IMR-90 (cell line): ENCODE measurements at regions of chr2 and their contacts with region 1.

Region 1: DNA sequence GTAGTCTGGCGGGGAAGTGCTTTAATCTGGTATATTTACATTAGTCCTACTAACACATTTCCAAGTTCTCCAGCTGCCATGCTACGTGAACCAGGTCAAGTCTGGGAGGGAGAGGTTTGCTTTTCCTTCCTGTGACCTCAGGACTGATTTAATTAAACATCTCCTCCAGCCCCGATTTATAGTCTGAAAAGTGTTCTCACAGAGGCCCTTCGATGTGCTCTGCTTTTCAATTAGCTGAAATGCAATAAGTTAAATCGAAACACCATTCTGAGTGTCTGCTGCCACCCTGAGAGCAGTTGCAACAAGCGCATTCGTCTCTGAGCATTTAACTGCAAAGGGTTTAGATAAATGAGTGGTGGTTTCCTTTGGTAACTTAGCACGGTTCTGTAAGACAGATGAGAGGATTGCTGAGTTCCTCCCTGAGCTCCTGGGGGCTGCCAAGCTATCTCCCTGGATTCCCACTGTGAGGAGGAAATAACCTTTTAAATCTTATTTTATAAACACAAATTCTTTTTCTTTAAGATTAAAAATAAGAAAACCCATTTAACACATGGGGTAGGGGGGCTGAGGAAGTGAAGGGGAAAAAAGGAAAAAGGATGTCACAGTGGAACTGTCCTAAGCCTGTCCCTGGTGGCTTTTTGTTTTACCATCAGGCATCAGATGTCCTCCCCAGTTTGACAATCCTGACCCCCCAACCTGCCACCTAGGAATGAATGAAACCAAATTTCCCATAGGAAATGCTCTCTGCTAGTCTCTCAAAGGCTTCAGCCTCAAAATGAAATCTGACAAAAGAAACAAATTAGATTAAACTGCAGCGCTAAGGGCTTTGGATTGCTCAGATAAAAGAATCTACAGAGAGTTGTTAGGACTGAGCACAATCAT is 56.5 kb upstream of the CREB1 start:
- DNase-seq: peak; percentile 88
- ATAC-seq: peak; percentile 83
- H3K4me3 ChIP-seq: peak overlapping the region; percentile 14; the same call in 1 of the 2 replicates
- H3K27ac ChIP-seq: peak overlapping the region; percentile 62
- H3K4me1 ChIP-seq: peaks cover 7% of the 10 kb centered on the region
- H3K27me3 ChIP-seq: no peaks in the 10 kb centered on the region
- CTCF ChIP-seq: peak; percentile 92
- POLR2A ChIP-seq: no peak
- RAD21 ChIP-seq: peak; percentile 98

Region 2: DNA sequence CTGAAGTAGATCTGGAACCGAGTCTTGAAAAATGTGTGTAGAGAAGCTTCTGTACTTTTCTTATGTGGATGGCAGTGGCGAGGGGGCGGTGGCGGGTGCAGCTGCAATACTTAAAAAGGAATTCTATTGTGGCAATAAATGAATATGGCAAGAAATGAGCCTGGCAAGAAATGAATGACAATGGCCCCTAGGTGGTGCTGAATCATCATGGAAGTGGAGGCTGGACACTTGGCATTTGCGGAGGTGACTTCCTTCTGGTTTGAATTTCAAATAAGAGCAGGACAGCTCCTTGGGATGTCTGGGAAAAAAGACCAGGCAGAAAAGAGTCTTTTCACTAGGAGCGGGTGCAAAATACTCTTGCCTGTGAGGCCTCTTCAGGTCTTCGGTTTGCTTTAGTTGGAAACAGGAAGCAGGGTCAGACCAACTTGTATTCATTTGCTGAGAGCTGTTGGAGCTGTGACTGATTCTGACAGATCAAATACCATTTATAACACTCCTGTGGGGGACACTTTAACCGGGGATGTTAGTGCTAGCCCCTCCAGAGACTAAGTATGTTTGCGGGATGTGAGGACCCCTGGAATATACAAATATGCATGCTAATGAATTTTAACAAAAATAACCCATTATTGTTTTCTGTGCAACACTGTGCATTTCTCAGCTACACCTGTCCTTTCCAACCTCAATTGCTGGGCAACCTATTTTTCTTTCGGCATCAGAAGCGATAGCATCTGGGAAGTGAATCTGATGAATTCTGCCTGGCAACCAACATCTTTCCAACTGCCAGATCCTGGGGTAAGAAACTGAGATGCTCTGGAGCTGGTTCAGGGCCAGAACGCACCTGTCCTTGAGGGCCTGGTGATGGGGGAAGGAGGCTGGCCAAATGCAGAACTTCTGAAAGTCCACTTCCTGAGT is 672.5 kb before region 1 on chr2:
- CTCF ChIA-PET with region 1: interaction called, 4 read pairs
- POLR2A ChIA-PET with region 1: no interaction called
- dilution Hi-C with region 1: no loop called
- in situ Hi-C with region 1: loop called (anchors 5 kb)
- intact Hi-C with region 1: loop called (anchors 1 kb)
- DNase-seq: peak; percentile 76
- ATAC-seq: peak; percentile 82
- H3K4me3 ChIP-seq: no peak overlapping the region
- H3K27ac ChIP-seq: no peak overlapping the region
- H3K4me1 ChIP-seq: no peaks in the 10 kb centered on the region
- H3K27me3 ChIP-seq: no peaks in the 10 kb centered on the region
- CTCF ChIP-seq: peak; percentile 76
- POLR2A ChIP-seq: no peak
- RAD21 ChIP-seq: peak; percentile 90

Region 3: DNA sequence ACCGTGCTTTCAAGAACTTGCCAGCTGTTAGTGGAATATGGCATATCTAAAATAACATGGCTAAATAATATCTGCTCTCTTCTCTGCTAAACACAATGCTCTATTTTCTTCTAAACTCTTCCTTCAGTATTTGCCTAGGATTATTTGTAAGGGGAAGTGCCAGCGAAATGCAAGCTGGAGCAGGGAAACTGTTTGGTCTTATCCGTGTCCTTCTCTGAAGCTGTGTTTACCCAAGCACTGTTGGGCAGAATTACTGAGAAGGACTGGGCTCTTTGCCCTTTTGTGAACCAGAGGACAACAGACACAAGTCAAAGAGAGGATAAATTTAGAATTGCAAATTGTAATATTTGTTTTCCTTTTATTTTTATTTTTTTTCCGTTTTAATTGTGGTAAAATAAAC is 510.3 kb before region 1 on chr2:
- CTCF ChIA-PET with region 1: no interaction called
- POLR2A ChIA-PET with region 1: no interaction called
- dilution Hi-C with region 1: no loop called
- in situ Hi-C with region 1: no loop called
- intact Hi-C with region 1: no loop called
- DNase-seq: no peak
- ATAC-seq: no peak
- H3K4me3 ChIP-seq: no peak overlapping the region
- H3K27ac ChIP-seq: no peak overlapping the region
- H3K4me1 ChIP-seq: no peaks in the 10 kb centered on the region
- H3K27me3 ChIP-seq: peaks cover 6% of the 10 kb centered on the region
- CTCF ChIP-seq: no peak
- POLR2A ChIP-seq: no peak
- RAD21 ChIP-seq: no peak

Region 4: GRCh38 chr2:207073801-207074678 is 399.2 kb before region 1 on chr2:
- CTCF ChIA-PET with region 1: no interaction called
- POLR2A ChIA-PET with region 1: no interaction called
- dilution Hi-C with region 1: no loop called
- in situ Hi-C with region 1: no loop called
- intact Hi-C with region 1: loop called (anchors 5 kb)
- DNase-seq: peak; percentile 12
- ATAC-seq: peak; percentile 48
- H3K4me3 ChIP-seq: no peak overlapping the region
- H3K27ac ChIP-seq: no peak overlapping the region
- H3K4me1 ChIP-seq: 0 out of 2 replicates have a peak, but pooled peaks cover 2% of the 10 kb centered on the region
- H3K27me3 ChIP-seq: no peaks in the 10 kb centered on the region
- CTCF ChIP-seq: no peak
- POLR2A ChIP-seq: no peak; the same call in none of the 2 replicates
- RAD21 ChIP-seq: no peak

Region 5: DNA sequence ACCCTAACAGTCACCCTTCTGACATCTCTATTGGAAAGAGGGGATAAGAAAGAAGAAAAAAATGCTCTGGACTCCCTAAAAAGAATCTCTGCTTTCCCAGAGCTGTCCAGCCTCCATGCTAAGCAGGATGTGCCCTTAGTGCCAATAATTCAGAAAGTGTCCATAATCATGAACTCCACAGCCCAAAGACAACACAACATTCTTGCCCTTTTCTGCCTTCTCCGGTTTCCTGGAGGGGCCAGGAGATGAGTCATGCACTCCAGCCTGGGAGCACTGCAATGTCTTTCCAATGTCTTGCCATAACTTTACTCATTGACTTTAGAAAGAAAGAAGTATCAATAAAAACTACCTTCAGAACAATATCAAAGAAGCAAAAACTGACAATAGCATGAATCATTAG is 351.5 kb before region 1 on chr2:
- CTCF ChIA-PET with region 1: interaction called, 5 read pairs
- POLR2A ChIA-PET with region 1: no interaction called
- dilution Hi-C with region 1: no loop called
- in situ Hi-C with region 1: no loop called
- intact Hi-C with region 1: loop called (anchors 5 kb)
- DNase-seq: peak; percentile 85
- ATAC-seq: peak; percentile 81
- H3K4me3 ChIP-seq: no peak overlapping the region
- H3K27ac ChIP-seq: peak overlapping the region; percentile 21; the same call in 1 of the 2 replicates
- H3K4me1 ChIP-seq: peaks cover 26% of the 10 kb centered on the region
- H3K27me3 ChIP-seq: no peaks in the 10 kb centered on the region
- CTCF ChIP-seq: no peak
- POLR2A ChIP-seq: no peak
- RAD21 ChIP-seq: no peak

Region 6: DNA sequence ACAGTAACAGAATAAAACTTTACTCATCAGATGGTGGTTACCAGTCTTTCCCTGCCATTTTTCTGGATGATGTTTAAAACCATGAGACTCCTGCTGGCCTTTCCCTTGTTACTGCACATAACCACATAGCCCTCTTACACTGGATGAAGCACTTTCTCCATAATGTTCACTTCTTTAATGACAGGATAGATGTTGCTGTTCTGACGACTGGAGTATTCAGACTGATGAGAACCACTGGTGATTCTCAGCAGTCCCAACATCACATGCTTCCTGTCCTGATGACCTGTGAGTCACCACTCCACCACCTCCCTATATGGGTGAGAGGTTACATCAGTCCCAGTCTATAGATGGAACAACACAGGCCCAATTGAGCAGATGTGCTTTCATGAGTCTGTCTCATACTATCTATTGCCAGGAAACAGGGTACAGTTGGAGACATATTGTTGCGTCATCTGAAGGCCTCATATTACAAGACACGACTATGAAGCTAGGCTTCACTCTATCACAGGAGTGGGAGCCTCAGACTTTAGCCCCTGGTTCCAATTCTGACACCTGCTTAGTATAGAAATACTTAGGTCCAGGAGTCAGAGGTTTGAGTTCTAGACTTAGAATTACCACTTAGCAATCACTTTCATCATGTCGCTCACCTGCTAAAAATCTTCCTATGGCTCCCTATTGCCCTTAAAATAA is 161.8 kb before region 1 on chr2:
- CTCF ChIA-PET with region 1: interaction called, 3 read pairs
- POLR2A ChIA-PET with region 1: no interaction called
- dilution Hi-C with region 1: no loop called
- in situ Hi-C with region 1: no loop called
- intact Hi-C with region 1: loop called (anchors 2 kb)
- DNase-seq: peak; percentile 100
- ATAC-seq: peak; percentile 82
- H3K4me3 ChIP-seq: no peak overlapping the region
- H3K27ac ChIP-seq: peak overlapping the region; percentile 44; the same call in 1 of the 2 replicates
- H3K4me1 ChIP-seq: peaks cover 12% of the 10 kb centered on the region
- H3K27me3 ChIP-seq: no peaks in the 10 kb centered on the region
- CTCF ChIP-seq: peak; percentile 51
- POLR2A ChIP-seq: no peak; the same call in 1 of the 2 replicates
- RAD21 ChIP-seq: peak; percentile 65

Region 7: GRCh38 chr2:207334624-207335371 is 138.5 kb before region 1 on chr2:
- CTCF ChIA-PET with region 1: interaction called, 3 read pairs
- POLR2A ChIA-PET with region 1: no interaction called
- dilution Hi-C with region 1: no loop called
- in situ Hi-C with region 1: no loop called
- intact Hi-C with region 1: loop called (anchors 1 kb)
- DNase-seq: peak; percentile 100
- ATAC-seq: peak; percentile 79
- H3K4me3 ChIP-seq: peak overlapping the region; percentile 24
- H3K27ac ChIP-seq: peak overlapping the region; percentile 67
- H3K4me1 ChIP-seq: peaks cover 14% of the 10 kb centered on the region
- H3K27me3 ChIP-seq: no peaks in the 10 kb centered on the region
- CTCF ChIP-seq: no peak
- POLR2A ChIP-seq: peak; percentile 86
- RAD21 ChIP-seq: no peak; the same call in none of the 2 replicates

Region 8: GRCh38 chr2:207448006-207448405 is 25.3 kb before region 1 on chr2:
- CTCF ChIA-PET with region 1: no interaction called
- POLR2A ChIA-PET with region 1: no interaction called
- dilution Hi-C with region 1: no loop called
- in situ Hi-C with region 1: no loop called
- intact Hi-C with region 1: no loop called
- DNase-seq: no peak
- ATAC-seq: peak; percentile 62
- H3K4me3 ChIP-seq: no peak overlapping the region
- H3K27ac ChIP-seq: no peak overlapping the region
- H3K4me1 ChIP-seq: peaks cover 3% of the 10 kb centered on the region; the same call in 1 of the 2 replicates
- H3K27me3 ChIP-seq: no peaks in the 10 kb centered on the region
- CTCF ChIP-seq: no peak
- POLR2A ChIP-seq: no peak
- RAD21 ChIP-seq: no peak

Region 9: DNA sequence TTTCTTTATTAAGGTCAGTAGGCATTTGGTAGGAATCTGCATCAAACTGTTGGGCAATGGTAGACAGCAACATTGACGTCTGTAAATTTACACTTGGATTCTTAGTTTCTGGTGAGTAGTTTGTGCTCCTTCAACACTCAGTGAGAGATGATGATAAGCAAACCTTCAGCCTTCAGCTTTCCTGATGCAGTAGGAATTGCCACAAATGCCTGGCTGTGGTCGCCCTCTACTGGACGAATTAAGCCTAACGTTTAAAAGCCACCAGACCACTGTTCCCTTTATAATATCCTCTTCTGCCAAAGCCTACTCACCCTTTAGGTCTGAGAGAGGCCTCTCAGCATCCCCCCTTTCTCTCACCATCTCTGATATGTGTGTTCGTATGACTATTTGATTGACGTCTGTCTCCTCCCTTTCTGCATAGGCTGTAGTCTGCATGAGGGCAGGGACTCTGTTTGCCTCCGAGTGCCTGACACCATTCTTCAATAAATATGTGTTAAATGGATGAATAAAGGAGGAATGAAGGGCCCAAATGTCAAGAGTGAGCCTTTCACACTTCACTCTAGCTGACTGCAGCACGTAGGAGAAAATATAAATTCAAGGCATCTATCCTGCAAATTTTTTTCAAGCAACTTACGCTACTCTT is 599.1 kb after region 1 on chr2:
- CTCF ChIA-PET with region 1: no interaction called
- POLR2A ChIA-PET with region 1: no interaction called
- dilution Hi-C with region 1: no loop called
- in situ Hi-C with region 1: loop called (anchors 25 kb)
- intact Hi-C with region 1: no loop called
- DNase-seq: peak; percentile 72
- ATAC-seq: peak; percentile 93
- H3K4me3 ChIP-seq: no peak overlapping the region
- H3K27ac ChIP-seq: no peak overlapping the region
- H3K4me1 ChIP-seq: no peaks in the 10 kb centered on the region
- H3K27me3 ChIP-seq: peaks cover 5% of the 10 kb centered on the region
- CTCF ChIP-seq: peak; percentile 85
- POLR2A ChIP-seq: 0 out of 2 replicates have a peak, but pooled peaks have one; percentile 42
- RAD21 ChIP-seq: peak; percentile 98